ENCODE measurements at regions of chr2 and their contacts with region 1.

Region 1: DNA sequence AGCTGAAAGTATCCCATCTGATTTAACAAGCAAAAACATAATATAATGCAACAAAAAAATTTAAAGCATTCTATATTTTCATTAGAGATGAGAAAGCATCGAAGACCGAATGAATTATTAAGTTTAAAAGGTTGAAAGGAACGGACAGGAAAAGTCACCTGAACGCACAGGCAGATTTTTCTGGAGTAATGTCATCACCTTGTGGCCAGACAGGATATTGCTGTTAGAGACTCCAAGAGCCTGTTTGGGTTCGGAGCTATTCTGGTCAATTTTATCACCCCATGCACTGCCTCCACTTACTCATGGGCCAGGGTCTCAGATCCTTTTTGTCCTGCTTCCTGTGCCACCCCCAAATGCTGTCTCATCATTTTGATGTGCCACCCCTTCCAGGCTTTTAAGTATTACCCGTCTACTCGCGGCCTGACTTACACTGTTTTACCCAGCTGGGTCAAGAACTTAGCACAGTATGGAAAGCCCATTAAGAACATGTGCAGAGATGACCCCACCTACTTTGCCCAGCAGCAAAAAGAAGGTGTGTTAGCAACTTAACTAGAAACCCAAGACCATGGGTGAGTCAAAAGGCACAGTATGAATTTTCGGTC is 27.3 kb downstream of the GKN2 start:
- DNase-seq: peak; percentile 70
- H3K4me3 Mint-ChIP-seq: no peak overlapping the region
- H3K27ac Mint-ChIP-seq: no peak overlapping the region
- H3K4me1 Mint-ChIP-seq: peaks cover 8% of the 10 kb centered on the region
- H3K27me3 Mint-ChIP-seq: peaks cover 30% of the 10 kb centered on the region

Region 2: GRCh38 chr2:68487773-68488355 is 437.5 kb before region 1 on chr2:
- CTCF ChIA-PET with region 1: interaction called, 27 read pairs
- DNase-seq: no peak
- H3K4me3 Mint-ChIP-seq: no peak overlapping the region
- H3K27ac Mint-ChIP-seq: no peak overlapping the region
- H3K4me1 Mint-ChIP-seq: peaks cover 3% of the 10 kb centered on the region
- H3K27me3 Mint-ChIP-seq: no peaks in the 10 kb centered on the region

Region 3: GRCh38 chr2:68709421-68709911 is 215.9 kb before region 1 on chr2:
- CTCF ChIA-PET with region 1: interaction called, 59 read pairs
- DNase-seq: no peak
- H3K4me3 Mint-ChIP-seq: no peak overlapping the region
- H3K27ac Mint-ChIP-seq: no peak overlapping the region
- H3K4me1 Mint-ChIP-seq: peaks cover 32% of the 10 kb centered on the region
- H3K27me3 Mint-ChIP-seq: no peaks in the 10 kb centered on the region

Region 4: GRCh38 chr2:68751397-68752339 is 173.7 kb before region 1 on chr2:
- CTCF ChIA-PET with region 1: interaction called, 44 read pairs
- DNase-seq: peak; percentile 95
- H3K4me3 Mint-ChIP-seq: no peak overlapping the region
- H3K27ac Mint-ChIP-seq: peak overlapping the region; percentile 74
- H3K4me1 Mint-ChIP-seq: peaks cover 92% of the 10 kb centered on the region
- H3K27me3 Mint-ChIP-seq: no peaks in the 10 kb centered on the region

Region 5: GRCh38 chr2:68839260-68839833 is 86.0 kb before region 1 on chr2:
- CTCF ChIA-PET with region 1: interaction called, 30 read pairs
- DNase-seq: peak; percentile 46
- H3K4me3 Mint-ChIP-seq: no peak overlapping the region
- H3K27ac Mint-ChIP-seq: no peak overlapping the region
- H3K4me1 Mint-ChIP-seq: peaks cover 34% of the 10 kb centered on the region
- H3K27me3 Mint-ChIP-seq: peaks cover 3% of the 10 kb centered on the region

Region 6: DNA sequence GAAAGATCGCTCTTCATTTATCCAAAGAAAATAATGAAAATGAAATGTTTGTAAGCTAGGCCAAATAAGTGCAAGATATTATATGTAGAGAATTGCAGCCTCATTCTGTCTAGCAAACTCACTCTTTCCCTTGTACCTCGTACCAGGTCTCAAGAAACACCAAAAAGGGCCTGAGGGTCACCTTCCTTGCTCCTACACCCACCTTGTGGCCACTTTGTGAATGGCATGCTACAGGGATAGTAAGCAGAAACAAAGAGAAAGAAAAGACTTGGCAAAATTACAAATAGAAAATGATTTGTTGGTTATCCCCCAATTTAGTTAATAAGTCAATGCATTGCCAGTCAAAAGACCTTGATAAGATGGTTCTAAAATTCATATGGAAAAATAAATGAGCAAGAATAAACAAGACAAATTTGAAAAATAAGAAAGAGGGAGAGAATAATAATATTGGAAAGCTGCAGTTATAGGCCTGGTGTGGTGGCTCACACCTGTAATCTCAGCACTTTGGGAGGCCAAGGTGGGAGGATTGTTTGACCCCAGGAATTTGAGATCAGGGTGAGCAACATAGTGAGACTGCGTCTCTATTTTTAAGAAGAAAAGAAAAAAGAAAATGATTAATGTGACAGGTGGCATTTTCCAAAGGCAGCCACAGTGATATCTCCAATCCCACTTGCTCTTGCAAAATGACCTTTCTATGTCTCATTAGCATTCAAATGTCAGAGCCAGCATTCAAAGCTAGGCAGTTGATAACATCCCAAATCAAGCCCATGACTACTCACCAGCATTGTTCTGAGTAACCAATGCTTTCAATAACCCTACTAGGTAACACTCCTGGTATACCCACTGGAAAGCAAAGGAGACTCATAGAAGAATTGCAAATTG is 15.4 kb before region 1 on chr2:
- CTCF ChIA-PET with region 1: interaction called, 26 read pairs
- DNase-seq: peak; percentile 79
- H3K4me3 Mint-ChIP-seq: no peak overlapping the region
- H3K27ac Mint-ChIP-seq: peak overlapping the region; percentile 53
- H3K4me1 Mint-ChIP-seq: peaks cover 40% of the 10 kb centered on the region
- H3K27me3 Mint-ChIP-seq: no peaks in the 10 kb centered on the region

Region 7: GRCh38 chr2:68943581-68944568 is 18.5 kb after region 1 on chr2:
- CTCF ChIA-PET with region 1: interaction called, 31 read pairs
- DNase-seq: peak; percentile 59
- H3K4me3 Mint-ChIP-seq: no peak overlapping the region
- H3K27ac Mint-ChIP-seq: no peak overlapping the region
- H3K4me1 Mint-ChIP-seq: no peaks in the 10 kb centered on the region
- H3K27me3 Mint-ChIP-seq: peaks cover 45% of the 10 kb centered on the region

Measured in activated naive CD4-positive, alpha-beta T cell treated with anti-CD3 and anti-CD28 coated beads, Interleukin-2, amount 10 ng/mL, durations not matched to agents 7 days and 5 days (primary cell).